AG04450 (cell line): ENCODE measurements at regions of chr20 and their contacts with region 1.

Region 1: GRCh38 chr20:51650685-51651134 is 108.2 kb upstream of the NFATC2 start:
- DNase-seq: peak; percentile 36
- H3K4me3 ChIP-seq: no peak overlapping the region
- H3K27ac ChIP-seq: no peak overlapping the region
- H3K27me3 ChIP-seq: no peaks in the 10 kb centered on the region
- CTCF ChIP-seq: no peak

Region 2: DNA sequence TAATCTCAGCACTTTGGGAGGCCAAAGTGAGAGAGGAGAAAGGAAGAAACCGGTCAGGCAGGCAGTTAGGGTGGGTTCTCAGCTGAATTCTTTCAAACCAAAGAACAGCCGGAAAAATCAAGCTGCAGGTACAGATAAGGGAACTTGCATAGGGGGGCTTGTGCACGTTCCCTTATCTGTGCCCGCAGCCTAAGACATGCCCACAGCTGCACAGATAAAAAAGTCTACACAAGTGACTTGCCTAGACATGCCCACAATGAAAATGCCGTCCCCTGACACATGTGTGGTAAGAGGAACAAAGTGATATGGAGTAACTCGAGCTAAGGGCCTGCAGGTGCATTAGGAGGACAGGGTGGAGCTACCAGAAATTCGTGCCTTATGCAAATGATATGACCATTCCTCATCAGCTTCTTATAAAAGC is 327.4 kb after region 1 on chr20:
- CTCF ChIA-PET with region 1: no interaction called
- POLR2A ChIA-PET with region 1: interaction called, 12 read pairs
- DNase-seq: no peak
- H3K4me3 ChIP-seq: no peak overlapping the region
- H3K27ac ChIP-seq: no peak overlapping the region
- H3K27me3 ChIP-seq: no peaks in the 10 kb centered on the region
- CTCF ChIP-seq: no peak